ENCODE measurements at regions of chr6 and their contacts with region 1.

Region 1: DNA sequence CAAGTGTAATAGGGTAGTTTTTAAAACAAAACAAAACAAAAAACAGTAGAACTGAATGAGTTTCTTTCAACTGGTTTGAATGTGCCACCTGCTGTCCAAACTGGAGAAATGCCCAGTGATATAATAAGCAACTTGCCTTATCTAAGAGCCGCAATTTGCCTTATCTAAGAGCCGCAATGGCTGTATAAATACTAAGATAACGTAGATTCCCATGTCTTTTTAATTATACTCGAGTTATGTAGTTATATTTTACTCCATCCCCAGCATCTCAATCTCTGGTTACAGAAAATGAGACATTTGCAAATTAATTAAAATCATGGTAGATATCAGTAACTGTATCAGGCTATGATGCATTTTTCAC is 67.2 kb downstream of the RPP40 start:
- DNase-seq: no peak
- H3K4me3 ChIP-seq: no peak overlapping the region
- H3K27ac ChIP-seq: no peak overlapping the region
- H3K4me1 ChIP-seq: peaks cover 43% of the 10 kb centered on the region
- H3K27me3 ChIP-seq: no peaks in the 10 kb centered on the region
- CTCF ChIP-seq: peak; percentile 77

Region 2: GRCh38 chr6:4313044-4313686 is 623.5 kb before region 1 on chr6:
- intact Hi-C with region 1: loop called (anchors 10 kb)
- DNase-seq: peak; percentile 29
- H3K4me3 ChIP-seq: no peak overlapping the region
- H3K27ac ChIP-seq: peak overlapping the region; percentile 56
- H3K4me1 ChIP-seq: peaks cover 28% of the 10 kb centered on the region
- H3K27me3 ChIP-seq: no peaks in the 10 kb centered on the region
- CTCF ChIP-seq: peak; percentile 55

Region 3: GRCh38 chr6:4879724-4880371 is 56.8 kb before region 1 on chr6:
- intact Hi-C with region 1: no loop called
- DNase-seq: no peak
- H3K4me3 ChIP-seq: no peak overlapping the region
- H3K27ac ChIP-seq: no peak overlapping the region
- H3K4me1 ChIP-seq: peaks cover 14% of the 10 kb centered on the region
- H3K27me3 ChIP-seq: no peaks in the 10 kb centered on the region
- CTCF ChIP-seq: no peak

Measured in left ventricle myocardium inferior (tissue), 1 donor.